ENCODE measurements at regions of chr3 and their contacts with region 1.

Region 1: DNA sequence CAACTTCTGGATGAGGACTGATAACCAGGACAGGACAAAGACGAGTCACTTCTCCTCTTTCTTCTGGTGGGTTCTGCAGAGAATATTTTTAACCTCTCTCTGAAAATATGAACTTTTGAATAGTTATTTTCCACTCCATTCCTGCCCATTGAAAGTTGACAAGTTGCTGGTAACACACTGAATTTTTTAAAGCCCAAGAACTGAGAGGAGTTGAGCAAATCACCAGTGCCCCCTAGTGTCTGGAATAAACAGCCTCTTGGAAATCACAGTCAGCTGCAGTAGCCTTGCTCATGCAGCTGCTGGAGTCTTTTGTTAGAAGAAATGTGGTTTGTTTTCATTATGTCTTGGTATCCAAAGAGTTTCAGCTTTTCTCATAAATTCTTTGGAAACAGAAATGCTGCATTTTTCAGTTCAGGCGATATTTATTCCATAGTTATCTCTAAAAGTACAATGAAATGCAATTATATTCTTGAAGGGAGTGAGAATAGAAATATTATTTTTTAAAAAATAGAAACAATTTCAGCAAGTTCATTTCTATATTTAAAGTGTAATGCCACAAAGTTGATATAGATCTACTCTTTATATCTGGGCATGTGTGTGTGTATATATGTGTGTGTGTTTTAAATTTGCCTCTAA is 741.0 kb upstream of the CBLB start:
- DNase-seq: peak; percentile 77
- ATAC-seq: peak; percentile 95
- H3K4me3 ChIP-seq: no peak overlapping the region
- H3K27ac ChIP-seq: peak overlapping the region; percentile 55
- H3K4me1 ChIP-seq: peaks cover 5% of the 10 kb centered on the region
- H3K27me3 ChIP-seq: no peaks in the 10 kb centered on the region
- CTCF ChIP-seq: peak; percentile 83 to 87 (median 86)
- EP300 ChIP-seq: no peak
- POLR2A ChIP-seq: no peak
- RAD21 ChIP-seq: peak; percentile 99

Region 2: GRCh38 chr3:105676621-105677300 is 933.0 kb before region 1 on chr3:
- CTCF ChIA-PET with region 1: interaction called, 3 read pairs
- POLR2A ChIA-PET with region 1: no interaction called
- RAD21 ChIA-PET with region 1: interaction called, 3 read pairs
- SMC1A ChIA-PET with region 1: interaction called, 5 read pairs
- in situ Hi-C with region 1: loop called (anchors 10 kb)
- intact Hi-C with region 1: no loop called
- DNase-seq: no peak
- ATAC-seq: no peak
- H3K4me3 ChIP-seq: no peak overlapping the region
- H3K27ac ChIP-seq: no peak overlapping the region
- H3K4me1 ChIP-seq: no peaks in the 10 kb centered on the region
- H3K27me3 ChIP-seq: no peaks in the 10 kb centered on the region
- CTCF ChIP-seq: no peak
- EP300 ChIP-seq: no peak
- POLR2A ChIP-seq: no peak
- RAD21 ChIP-seq: no peak

Region 3: DNA sequence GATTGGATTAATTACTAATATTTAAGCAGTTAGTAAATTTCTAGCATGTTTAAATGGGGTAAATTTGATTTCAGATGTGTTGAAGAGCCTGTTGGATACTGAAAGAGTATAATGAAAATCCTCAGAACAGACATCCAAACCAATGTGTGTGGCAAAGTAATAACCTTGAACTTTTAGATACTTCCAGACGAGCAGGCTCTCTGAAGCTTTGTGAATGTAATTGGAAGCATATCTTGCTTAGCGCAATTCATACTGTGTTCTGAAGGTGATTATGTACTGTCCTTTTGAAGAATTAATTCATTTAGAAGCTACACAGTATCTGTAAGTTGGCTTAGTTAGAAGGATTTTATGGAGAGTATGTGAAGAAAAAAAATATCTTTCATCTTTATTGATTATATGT is 902.8 kb before region 1 on chr3:
- CTCF ChIA-PET with region 1: interaction called, 12 read pairs
- POLR2A ChIA-PET with region 1: no interaction called
- RAD21 ChIA-PET with region 1: interaction called, 3 read pairs
- SMC1A ChIA-PET with region 1: interaction called, 8 read pairs
- in situ Hi-C with region 1: no loop called
- intact Hi-C with region 1: no loop called
- DNase-seq: no peak
- ATAC-seq: no peak
- H3K4me3 ChIP-seq: no peak overlapping the region
- H3K27ac ChIP-seq: no peak overlapping the region
- H3K4me1 ChIP-seq: no peaks in the 10 kb centered on the region
- H3K27me3 ChIP-seq: no peaks in the 10 kb centered on the region
- CTCF ChIP-seq: no peak
- EP300 ChIP-seq: no peak
- POLR2A ChIP-seq: no peak
- RAD21 ChIP-seq: no peak

Region 4: GRCh38 chr3:106255870-106256248 is 353.9 kb before region 1 on chr3:
- CTCF ChIA-PET with region 1: interaction called, 6 read pairs
- POLR2A ChIA-PET with region 1: no interaction called
- RAD21 ChIA-PET with region 1: interaction called, 11 read pairs
- SMC1A ChIA-PET with region 1: interaction called, 15 read pairs
- in situ Hi-C with region 1: no loop called
- intact Hi-C with region 1: loop called (anchors 1 kb)
- DNase-seq: peak; percentile 93
- ATAC-seq: peak; percentile 88
- H3K4me3 ChIP-seq: peak overlapping the region; percentile 83
- H3K27ac ChIP-seq: peak overlapping the region; percentile 99
- H3K4me1 ChIP-seq: no peaks in the 10 kb centered on the region
- H3K27me3 ChIP-seq: no peaks in the 10 kb centered on the region
- CTCF ChIP-seq: no peak
- EP300 ChIP-seq: peak in 1 of 2 experiments; percentile 82; a peak in 2 of 4 replicates
- POLR2A ChIP-seq: peak; percentile 71
- RAD21 ChIP-seq: peak; percentile 7; the same call in 1 of the 2 replicates

Region 5: DNA sequence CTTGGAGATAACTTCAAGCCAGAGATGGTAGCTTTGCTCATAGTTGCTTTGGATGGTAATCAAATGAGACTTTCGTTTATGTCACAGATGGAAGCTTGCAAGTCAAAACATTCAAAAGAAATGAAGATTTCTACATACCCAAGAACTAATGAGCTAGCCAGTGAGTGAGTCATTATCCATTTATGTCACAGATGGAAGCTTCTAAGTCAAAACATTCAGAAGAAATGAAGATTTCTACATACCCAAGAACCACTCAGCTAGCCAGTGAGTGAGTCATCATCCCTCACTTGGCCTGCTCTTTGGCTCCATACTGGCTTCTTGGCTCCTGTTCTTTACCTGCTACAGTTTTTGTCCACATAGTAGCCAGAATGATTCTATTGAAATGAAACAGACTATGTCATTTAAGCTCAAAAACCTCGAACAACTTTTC is 181.2 kb before region 1 on chr3:
- CTCF ChIA-PET with region 1: no interaction called
- POLR2A ChIA-PET with region 1: no interaction called
- RAD21 ChIA-PET with region 1: no interaction called
- SMC1A ChIA-PET with region 1: no interaction called
- in situ Hi-C with region 1: no loop called
- intact Hi-C with region 1: loop called (anchors 5 kb)
- DNase-seq: no peak
- ATAC-seq: peak; percentile 44; the same call in 2 of the 3 replicates
- H3K4me3 ChIP-seq: no peak overlapping the region
- H3K27ac ChIP-seq: no peak overlapping the region
- H3K4me1 ChIP-seq: peaks cover 13% of the 10 kb centered on the region
- H3K27me3 ChIP-seq: no peaks in the 10 kb centered on the region
- CTCF ChIP-seq: no peak
- EP300 ChIP-seq: no peak
- POLR2A ChIP-seq: no peak
- RAD21 ChIP-seq: no peak